OCI-LY7 (cell line): ENCODE measurements at regions of chr7 and their contacts with region 1.

Region 1: DNA sequence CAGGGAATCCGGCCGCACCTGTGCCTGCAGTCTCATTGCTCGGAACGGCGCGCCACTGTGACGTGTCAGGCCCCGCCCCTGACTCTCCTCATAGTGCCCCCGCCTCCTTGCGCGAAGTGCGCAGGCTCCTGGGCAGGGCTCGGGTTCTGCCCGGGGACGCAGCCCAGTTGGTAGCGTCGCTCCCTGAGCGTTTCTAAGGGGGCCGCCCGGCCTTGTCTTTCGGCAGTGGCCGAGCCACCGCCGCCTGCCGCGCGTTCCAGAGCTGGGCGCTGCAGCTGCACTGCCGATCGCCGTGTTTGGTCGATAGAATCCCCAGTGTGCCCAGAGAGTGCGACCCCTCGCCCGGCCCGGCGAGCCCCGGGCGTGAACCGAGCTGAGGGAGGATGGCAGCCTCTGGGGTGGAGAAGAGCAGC is at the start of gene KLHL7:
- DNase-seq: peak; percentile 96
- H3K4me3 ChIP-seq: peak within 1 kb of the TSS; percentile 84
- H3K27ac ChIP-seq: peak within 1 kb of the TSS; percentile 80
- H3K4me1 ChIP-seq: peaks cover 22% of the 10 kb centered on the region
- CTCF ChIP-seq: no peak
- total RNA-seq, gene KLHL7: 24.4 and 25.8 TPM in 2 replicates

Region 2: GRCh38 chr7:21427182-21427870 is 1678.3 kb before region 1 on chr7:
- CTCF ChIA-PET with region 1: no interaction called
- POLR2A ChIA-PET with region 1: interaction called, 8 read pairs
- intact Hi-C with region 1: loop called (anchors 5 kb)
- DNase-seq: peak; percentile 98
- H3K4me3 ChIP-seq: peak overlapping the region; percentile 88
- H3K27ac ChIP-seq: peak overlapping the region; percentile 86
- H3K4me1 ChIP-seq: peaks cover 42% of the 10 kb centered on the region
- CTCF ChIP-seq: no peak

Region 3: GRCh38 chr7:22822486-22823141 is 283.0 kb before region 1 on chr7 and contains the start of gene TOMM7:
- CTCF ChIA-PET with region 1: no interaction called
- POLR2A ChIA-PET with region 1: interaction called, 10 read pairs
- intact Hi-C with region 1: no loop called
- DNase-seq: peak; percentile 98
- H3K4me3 ChIP-seq: peak within 1 kb of the TSS; percentile 77
- H3K27ac ChIP-seq: peak within 1 kb of the TSS; percentile 39
- H3K4me1 ChIP-seq: peaks cover 29% of the 10 kb centered on the region
- CTCF ChIP-seq: peak; percentile 51
- total RNA-seq, gene TOMM7: 184 and 195 TPM in 2 replicates